A673 (cell line): ENCODE measurements at regions of chr20 and their contacts with region 1.

Region 1: DNA sequence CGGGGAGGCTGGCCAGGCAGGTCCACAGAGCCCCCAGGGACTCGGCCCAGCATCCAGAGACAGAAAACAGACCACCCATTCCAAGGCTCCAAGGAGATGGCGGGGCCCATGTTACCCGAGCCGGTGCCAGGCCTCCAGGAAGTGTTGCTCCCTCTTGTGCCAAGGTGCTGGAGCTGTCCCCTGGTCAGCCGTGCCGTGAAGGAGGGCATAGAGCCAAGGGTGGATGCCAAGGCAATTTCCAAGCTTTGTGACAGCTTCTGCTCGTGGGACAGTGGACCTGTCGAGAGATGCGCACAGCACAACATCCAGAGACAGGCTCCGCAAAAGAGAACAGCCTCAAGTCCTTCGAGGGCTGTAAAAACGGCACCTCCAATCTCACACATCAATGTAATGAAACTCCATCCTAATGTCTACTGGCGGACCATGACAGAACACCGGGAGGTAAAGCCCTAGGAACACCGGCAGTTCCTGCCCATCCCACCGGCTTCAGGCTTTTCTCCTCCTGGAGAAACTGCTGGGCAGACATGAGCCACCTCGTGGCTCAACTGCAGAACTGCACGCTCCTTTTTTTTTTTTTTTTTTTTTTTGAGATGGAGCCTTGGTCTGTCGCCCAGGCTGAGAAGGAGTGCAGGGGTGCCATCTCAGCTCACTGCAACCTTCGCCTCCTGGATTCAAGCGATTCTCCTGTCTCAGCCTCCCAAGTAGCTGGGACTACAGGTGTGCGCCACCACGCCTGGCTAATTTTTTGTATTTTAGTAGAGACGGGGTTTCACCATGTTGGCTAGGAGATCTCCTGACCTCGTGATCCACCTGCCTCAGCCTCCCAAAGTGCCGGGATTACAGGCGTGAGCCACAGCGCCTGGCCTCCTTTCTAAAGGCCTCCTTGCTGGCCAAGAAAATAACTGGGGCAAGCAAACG is 30.9 kb upstream of the AVP start:
- DNase-seq: peak; percentile 76
- H3K4me3 ChIP-seq: no peak overlapping the region
- H3K27ac ChIP-seq: no peak overlapping the region
- H3K4me1 ChIP-seq: no peaks in the 10 kb centered on the region
- H3K27me3 ChIP-seq: no peaks in the 10 kb centered on the region
- CTCF ChIP-seq: peak; percentile 78

Region 2: GRCh38 chr20:3051385-3052019 is 63.9 kb before region 1 on chr20:
- CTCF ChIA-PET with region 1: interaction called, 3 read pairs
- POLR2A ChIA-PET with region 1: no interaction called
- intact Hi-C with region 1: loop called (anchors 2 kb)
- DNase-seq: no peak
- H3K4me3 ChIP-seq: no peak overlapping the region
- H3K27ac ChIP-seq: no peak overlapping the region
- H3K4me1 ChIP-seq: peaks cover 2% of the 10 kb centered on the region
- H3K27me3 ChIP-seq: no peaks in the 10 kb centered on the region
- CTCF ChIP-seq: no peak